ENCODE measurements at regions of chr2 and their contacts with region 1.

Region 1: GRCh38 chr2:176096986-176097819 is 2.4 kb upstream of the HOXD12 start:
- DNase-seq: peak; percentile 50 to 77
- ATAC-seq: peak; percentile 79 to 90 (median 87)
- H3K4me3 ChIP-seq: peak overlapping the region; percentile 34
- H3K4me3 Mint-ChIP-seq: peak overlapping the region; percentile 84
- H3K27ac ChIP-seq: no peak overlapping the region
- H3K27ac Mint-ChIP-seq: peak overlapping the region in 1 of 2 donors; percentile 7
- H3K4me1 ChIP-seq: peaks cover 24% of the 10 kb centered on the region
- H3K4me1 Mint-ChIP-seq: peaks cover 18 to 28% of the 10 kb centered on the region in 2 donors
- H3K27me3 ChIP-seq: peaks cover 89% of the 10 kb centered on the region
- H3K27me3 Mint-ChIP-seq: peaks cover 72 to 73% of the 10 kb centered on the region in 2 donors
- CTCF ChIP-seq: peak; percentile 72

Region 2: DNA sequence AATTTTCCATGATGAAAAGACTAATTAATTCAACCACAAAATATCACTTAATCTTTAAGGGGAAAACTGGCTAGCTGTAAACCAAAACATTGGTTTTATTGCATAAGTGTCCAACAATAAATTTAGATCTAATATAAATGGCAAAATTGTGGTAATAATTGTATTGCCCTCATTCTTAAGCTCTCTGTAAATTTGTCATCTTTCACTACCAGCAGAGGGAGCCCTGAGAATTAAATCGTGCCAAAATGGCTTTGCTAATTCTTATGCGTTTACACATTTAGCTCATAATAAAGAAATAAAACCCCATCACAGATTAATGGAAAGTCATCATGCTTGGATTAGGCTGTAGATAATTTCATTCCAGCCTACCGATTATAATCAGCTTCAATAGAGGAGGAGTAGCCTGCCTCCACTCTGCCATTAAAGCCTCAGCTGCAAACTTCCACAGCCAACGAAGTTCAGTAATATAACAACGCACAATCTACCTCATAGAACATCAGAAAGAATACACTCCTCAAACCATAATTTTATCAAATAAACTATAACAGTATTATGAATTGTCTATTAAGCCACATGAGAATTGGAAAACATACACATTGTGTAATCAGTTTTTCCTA is 845.7 kb before region 1 on chr2:
- intact Hi-C with region 1: loop called (anchors 5 kb)
- DNase-seq: peak in 1 of 2 donors; percentile 54
- ATAC-seq: no peak
- H3K4me3 ChIP-seq: no peak overlapping the region
- H3K4me3 Mint-ChIP-seq: no peak overlapping the region
- H3K27ac ChIP-seq: no peak overlapping the region
- H3K27ac Mint-ChIP-seq: no peak overlapping the region
- H3K4me1 ChIP-seq: no peaks in the 10 kb centered on the region
- H3K4me1 Mint-ChIP-seq: peaks cover 5 to 7% of the 10 kb centered on the region in 2 donors
- H3K27me3 ChIP-seq: peaks cover 7% of the 10 kb centered on the region
- H3K27me3 Mint-ChIP-seq: peaks cover 12 to 49% of the 10 kb centered on the region in 2 donors
- CTCF ChIP-seq: peak; percentile 75

Region 3: DNA sequence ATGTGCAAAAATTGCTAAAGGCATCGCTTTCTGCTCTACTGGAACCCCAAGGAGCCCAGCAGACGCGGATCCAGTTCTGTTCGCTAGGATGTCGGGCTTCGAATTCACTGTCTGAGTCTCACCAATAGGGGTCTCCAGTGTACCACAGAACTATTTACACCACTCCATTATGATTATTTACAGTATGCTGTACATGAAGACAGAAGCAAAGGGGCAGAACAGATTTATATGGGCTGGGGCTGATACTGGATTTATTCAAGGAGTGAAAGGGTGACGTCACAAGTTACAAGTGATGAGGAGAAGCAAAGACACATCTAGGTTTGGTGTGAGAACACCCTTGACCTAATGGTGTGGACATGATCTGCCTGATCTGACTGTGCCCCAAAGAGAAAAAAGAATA is 730.4 kb before region 1 on chr2:
- intact Hi-C with region 1: loop called (anchors 1 kb)
- DNase-seq: peak in 1 of 2 donors; percentile 48
- ATAC-seq: peak; percentile 55 to 79 (median 76)
- H3K4me3 ChIP-seq: no peak overlapping the region
- H3K4me3 Mint-ChIP-seq: no peak overlapping the region
- H3K27ac ChIP-seq: no peak overlapping the region
- H3K27ac Mint-ChIP-seq: no peak overlapping the region
- H3K4me1 ChIP-seq: no peaks in the 10 kb centered on the region
- H3K4me1 Mint-ChIP-seq: no peaks in the 10 kb centered on the region
- H3K27me3 ChIP-seq: peaks cover 18% of the 10 kb centered on the region
- H3K27me3 Mint-ChIP-seq: peaks cover 20 to 32% of the 10 kb centered on the region in 2 donors
- CTCF ChIP-seq: peak; percentile 68

Region 4: DNA sequence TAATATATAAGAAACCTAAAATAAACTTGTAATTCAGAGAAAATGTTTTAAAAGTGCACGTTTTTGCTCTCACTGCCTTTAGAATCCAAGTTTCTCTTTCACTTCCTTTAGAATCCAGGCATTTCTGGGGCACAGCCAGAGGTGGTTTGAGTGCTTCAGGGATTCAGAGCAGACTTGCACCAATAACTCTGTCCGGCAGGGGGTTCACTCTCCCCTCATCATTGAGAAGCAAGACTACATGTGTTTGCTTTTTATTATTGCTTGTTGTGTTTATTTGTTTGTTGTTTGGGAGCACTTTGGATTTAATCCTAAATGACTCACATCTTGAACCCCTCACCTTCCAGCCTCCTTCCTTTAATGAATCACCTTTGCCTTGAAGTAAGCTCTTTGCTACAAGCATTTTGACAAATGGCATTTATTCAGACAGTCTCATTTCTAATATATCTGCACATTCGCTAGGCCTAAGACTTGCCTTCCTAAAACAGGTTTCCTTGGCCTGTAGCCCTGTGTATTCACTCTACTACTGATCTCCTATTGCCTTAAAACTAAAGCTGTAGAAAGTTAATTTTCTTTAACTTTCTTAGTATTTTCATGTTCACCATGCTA is 682.2 kb before region 1 on chr2:
- intact Hi-C with region 1: loop called (anchors 1 kb)
- DNase-seq: peak in 1 of 2 donors; percentile 18
- ATAC-seq: peak in 1 of 3 donors; percentile 56
- H3K4me3 ChIP-seq: no peak overlapping the region
- H3K4me3 Mint-ChIP-seq: no peak overlapping the region
- H3K27ac ChIP-seq: no peak overlapping the region
- H3K27ac Mint-ChIP-seq: no peak overlapping the region
- H3K4me1 ChIP-seq: no peaks in the 10 kb centered on the region
- H3K4me1 Mint-ChIP-seq: no peaks in the 10 kb centered on the region
- H3K27me3 ChIP-seq: no peaks in the 10 kb centered on the region
- H3K27me3 Mint-ChIP-seq: peaks cover 0 to 5% of the 10 kb centered on the region in 2 donors
- CTCF ChIP-seq: peak; percentile 51

Region 5: DNA sequence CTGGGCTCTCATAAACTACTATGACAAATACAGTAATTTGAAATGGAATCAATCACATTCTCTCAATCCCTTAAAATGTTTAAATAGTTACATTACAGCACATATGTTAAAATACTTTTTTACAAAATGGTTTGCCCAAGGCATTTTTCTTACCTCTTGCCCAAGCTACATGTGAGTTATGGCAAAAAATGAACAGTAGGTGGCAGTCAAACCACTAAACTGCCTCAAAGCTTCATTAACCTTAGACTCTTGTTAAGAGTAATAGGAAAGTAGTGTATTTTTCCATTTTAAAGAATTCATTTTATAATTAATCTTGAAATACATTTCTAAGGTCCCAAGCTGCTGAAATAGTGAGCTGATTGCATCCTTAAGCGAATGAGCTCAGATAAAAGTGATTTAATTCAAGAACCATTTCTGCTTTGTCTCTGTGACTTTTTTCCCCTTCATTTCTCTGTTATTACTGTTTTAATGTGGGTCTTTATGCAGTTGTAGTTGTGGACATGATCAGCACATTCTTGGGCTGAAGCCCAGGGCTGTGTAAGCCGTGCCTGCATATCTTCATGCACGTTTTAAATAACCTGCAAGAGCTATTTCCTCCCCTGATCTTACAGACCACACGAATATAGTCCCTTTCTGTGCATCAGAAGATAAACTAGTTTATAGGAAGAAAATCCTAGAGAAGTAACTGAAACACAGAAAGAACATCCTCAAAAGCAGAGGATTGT is 406.9 kb before region 1 on chr2:
- intact Hi-C with region 1: loop called (anchors 1 kb)
- DNase-seq: peak in 1 of 2 donors; percentile 70
- ATAC-seq: peak in 1 of 3 donors; percentile 67
- H3K4me3 ChIP-seq: no peak overlapping the region
- H3K4me3 Mint-ChIP-seq: no peak overlapping the region
- H3K27ac ChIP-seq: no peak overlapping the region
- H3K27ac Mint-ChIP-seq: no peak overlapping the region
- H3K4me1 ChIP-seq: no peaks in the 10 kb centered on the region
- H3K4me1 Mint-ChIP-seq: no peaks in the 10 kb centered on the region
- H3K27me3 ChIP-seq: no peaks in the 10 kb centered on the region
- H3K27me3 Mint-ChIP-seq: peaks cover 16 to 42% of the 10 kb centered on the region in 2 donors
- CTCF ChIP-seq: peak; percentile 75

Region 6: GRCh38 chr2:176067589-176068418 is 29.4 kb before region 1 on chr2:
- intact Hi-C with region 1: no loop called
- DNase-seq: no peak
- ATAC-seq: no peak
- H3K4me3 ChIP-seq: no peak overlapping the region
- H3K4me3 Mint-ChIP-seq: no peak overlapping the region
- H3K27ac ChIP-seq: no peak overlapping the region
- H3K27ac Mint-ChIP-seq: no peak overlapping the region
- H3K4me1 ChIP-seq: peaks cover 6% of the 10 kb centered on the region
- H3K4me1 Mint-ChIP-seq: no peaks in the 10 kb centered on the region
- H3K27me3 ChIP-seq: peaks cover 49% of the 10 kb centered on the region
- H3K27me3 Mint-ChIP-seq: peaks cover 46 to 59% of the 10 kb centered on the region in 2 donors
- CTCF ChIP-seq: no peak

Region 7: GRCh38 chr2:176079831-176080539 is 17.2 kb before region 1 on chr2:
- intact Hi-C with region 1: no loop called
- DNase-seq: peak in 1 of 2 donors; percentile 40
- ATAC-seq: peak in 2 of 3 donors; percentile 34 to 53
- H3K4me3 ChIP-seq: no peak overlapping the region
- H3K4me3 Mint-ChIP-seq: peak overlapping the region; percentile 75
- H3K27ac ChIP-seq: no peak overlapping the region
- H3K27ac Mint-ChIP-seq: peak overlapping the region; percentile 70 to 77
- H3K4me1 ChIP-seq: peaks cover 17% of the 10 kb centered on the region
- H3K4me1 Mint-ChIP-seq: peaks cover 9 to 23% of the 10 kb centered on the region in 2 donors
- H3K27me3 ChIP-seq: peaks cover 89% of the 10 kb centered on the region
- H3K27me3 Mint-ChIP-seq: peaks cover 66 to 72% of the 10 kb centered on the region in 2 donors
- CTCF ChIP-seq: peak; percentile 33

Region 8: DNA sequence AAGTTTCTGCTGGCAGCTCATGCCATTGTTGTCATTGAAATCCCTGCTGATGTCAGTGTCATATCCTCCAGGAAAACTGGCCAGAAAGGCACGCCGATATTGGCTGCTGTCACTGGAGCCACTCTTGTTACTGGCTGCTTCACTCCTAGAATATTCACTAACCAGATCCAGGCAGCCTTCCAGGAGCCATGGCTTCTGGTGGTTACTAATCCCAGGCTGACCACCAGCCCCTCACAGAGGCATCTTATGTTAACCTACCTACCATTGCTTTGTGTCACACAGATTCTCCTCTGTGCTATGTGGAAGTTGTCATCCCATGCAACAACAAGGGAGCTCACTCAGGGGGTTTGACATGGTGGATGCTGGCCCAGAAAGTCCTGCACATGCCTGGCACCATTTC is 145.1 kb after region 1 on chr2:
- intact Hi-C with region 1: no loop called
- DNase-seq: no peak
- ATAC-seq: no peak
- H3K4me3 ChIP-seq: no peak overlapping the region
- H3K4me3 Mint-ChIP-seq: no peak overlapping the region
- H3K27ac ChIP-seq: no peak overlapping the region
- H3K27ac Mint-ChIP-seq: no peak overlapping the region
- H3K4me1 ChIP-seq: no peaks in the 10 kb centered on the region
- H3K4me1 Mint-ChIP-seq: no peaks in the 10 kb centered on the region
- H3K27me3 ChIP-seq: peaks cover 6% of the 10 kb centered on the region
- H3K27me3 Mint-ChIP-seq: peaks cover 18 to 30% of the 10 kb centered on the region in 2 donors
- CTCF ChIP-seq: no peak

Region 9: GRCh38 chr2:176398243-176399073 is 301.3 kb after region 1 on chr2:
- intact Hi-C with region 1: no loop called
- DNase-seq: no peak
- ATAC-seq: no peak
- H3K4me3 ChIP-seq: no peak overlapping the region
- H3K4me3 Mint-ChIP-seq: no peak overlapping the region
- H3K27ac ChIP-seq: no peak overlapping the region
- H3K27ac Mint-ChIP-seq: no peak overlapping the region
- H3K4me1 ChIP-seq: no peaks in the 10 kb centered on the region
- H3K4me1 Mint-ChIP-seq: no peaks in the 10 kb centered on the region
- H3K27me3 ChIP-seq: no peaks in the 10 kb centered on the region
- H3K27me3 Mint-ChIP-seq: peaks cover 22 to 33% of the 10 kb centered on the region in 2 donors
- CTCF ChIP-seq: no peak